GM10248 (cell line): ENCODE measurements at regions of chr5 and their contacts with region 1.

Region 1: DNA sequence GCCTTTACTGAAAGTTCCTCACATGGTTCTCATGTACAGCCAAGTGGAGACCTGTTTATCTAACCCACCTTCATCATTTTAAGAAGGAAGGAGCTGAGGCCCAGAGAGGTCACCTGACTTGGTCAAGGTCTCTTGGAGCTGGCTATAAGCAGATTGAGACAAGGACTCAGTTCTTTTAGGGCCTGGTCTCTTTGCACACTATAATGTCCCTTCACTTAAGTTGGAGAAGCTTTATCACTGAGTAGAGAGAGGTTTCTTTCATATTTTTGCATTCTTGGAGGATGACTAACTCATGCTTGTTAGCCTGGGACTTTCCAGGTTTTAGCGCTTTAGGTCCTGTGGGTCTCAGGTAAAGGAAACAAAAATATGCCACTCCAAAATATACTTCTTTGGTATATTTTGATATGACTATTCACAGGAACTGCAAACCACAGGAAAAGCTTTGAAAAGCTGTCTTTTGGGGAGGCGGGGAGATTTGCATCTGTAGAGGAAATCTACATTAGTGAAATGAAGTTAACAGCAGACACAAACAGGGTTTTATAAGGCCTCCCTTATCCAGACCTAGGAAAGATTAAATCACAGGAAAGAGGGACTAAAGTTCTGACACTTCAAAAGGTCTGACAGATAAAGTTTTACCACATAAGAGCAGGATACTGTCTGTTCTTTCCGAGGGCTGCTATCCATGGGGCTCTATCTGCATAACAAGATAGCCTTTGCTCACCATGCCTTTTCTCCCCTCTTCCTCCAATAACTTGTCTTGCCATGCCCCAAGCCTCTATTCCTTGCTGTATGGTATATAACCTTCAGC is 95.8 kb upstream of the ANKRD55 start:
- DNase-seq: peak; percentile 26
- CTCF ChIP-seq: no peak

Region 2: GRCh38 chr5:55608595-55609349 is 720.2 kb before region 1 on chr5:
- CTCF ChIA-PET with region 1: no interaction called
- POLR2A ChIA-PET with region 1: no interaction called
- DNase-seq: no peak
- CTCF ChIP-seq: no peak

Region 3: DNA sequence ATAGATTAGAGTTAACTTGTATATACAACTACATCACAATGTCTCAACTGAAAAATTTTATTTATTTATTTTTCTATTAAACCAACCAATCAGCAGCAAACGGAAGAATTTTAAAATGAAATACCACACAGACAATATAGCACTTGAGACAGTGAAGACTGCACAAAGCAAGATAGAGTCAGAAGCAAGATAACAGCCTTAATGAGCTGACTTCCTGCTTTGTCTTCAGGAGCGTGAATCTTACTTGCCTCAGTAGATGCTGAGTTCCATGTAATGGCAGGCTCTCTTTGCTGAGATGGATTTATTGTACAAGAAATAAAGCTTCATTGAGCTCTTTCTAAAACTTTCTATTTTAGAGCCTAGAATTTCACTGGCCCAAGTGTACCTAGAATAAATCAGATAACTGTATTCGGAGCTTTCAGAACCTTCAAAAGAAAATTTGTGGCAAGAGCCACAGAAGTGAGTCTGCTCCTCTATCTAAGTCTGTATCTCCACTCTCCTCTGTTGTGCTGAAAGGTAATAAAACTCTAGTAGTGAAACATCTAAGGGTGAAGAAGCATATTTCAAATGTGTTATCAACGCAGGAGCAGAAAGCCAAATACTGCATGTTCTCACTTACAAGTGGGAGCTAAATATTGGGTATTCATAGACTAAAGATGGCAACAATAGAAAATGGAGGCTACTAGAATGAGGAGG is 12.5 kb before region 1 on chr5:
- CTCF ChIA-PET with region 1: interaction called, 15 read pairs
- POLR2A ChIA-PET with region 1: no interaction called
- DNase-seq: no peak
- CTCF ChIP-seq: no peak

Region 4: DNA sequence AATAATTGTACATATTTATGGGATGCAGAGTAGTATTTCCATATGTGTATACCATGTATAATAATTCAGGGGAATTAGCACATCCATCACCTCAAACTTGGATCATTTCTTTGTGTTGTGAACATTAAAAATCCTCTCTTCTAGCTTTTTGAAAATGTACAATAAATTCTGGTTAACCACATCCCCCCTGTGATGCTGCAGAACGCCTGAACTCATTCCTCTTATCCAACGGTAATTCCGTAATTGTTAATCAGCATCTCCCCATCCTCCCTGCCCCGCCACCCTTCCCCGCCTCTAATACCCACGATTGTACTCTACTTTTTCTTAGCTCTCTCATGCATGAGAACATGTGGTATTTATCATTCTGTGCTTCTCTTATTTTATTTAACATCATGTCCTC is 31.9 kb after region 1 on chr5:
- CTCF ChIA-PET with region 1: no interaction called
- POLR2A ChIA-PET with region 1: no interaction called
- DNase-seq: no peak
- CTCF ChIP-seq: no peak